ENCODE measurements at regions of chr9 and their contacts with region 1.

Region 1: GRCh38 chr9:127734747-127735529 is at the start of gene TOR2A:
- DNase-seq: peak; percentile 98 to 100 (median 99)
- ATAC-seq: peak; percentile 94
- H3K4me3 ChIP-seq: peak within 1 kb of the TSS; percentile 67 to 79
- H3K4me3 Mint-ChIP-seq: peak within 1 kb of the TSS; percentile 91
- H3K27ac ChIP-seq: peak within 1 kb of the TSS; percentile 59 to 87
- H3K27ac Mint-ChIP-seq: peak within 1 kb of the TSS; percentile 86
- H3K4me1 ChIP-seq: peaks cover 18% of the 10 kb centered on the region
- H3K4me1 Mint-ChIP-seq: peaks cover 7% of the 10 kb centered on the region
- H3K27me3 ChIP-seq: no peaks in the 10 kb centered on the region
- H3K27me3 Mint-ChIP-seq: no peaks in the 10 kb centered on the region
- CTCF ChIP-seq: peak; percentile 80
- total RNA-seq, gene TOR2A: 4.7 to 5.3 TPM

Region 2: GRCh38 chr9:127450830-127451724 is 283.9 kb before region 1 on chr9 and contains the starts of genes LRSAM1 and RPL12:
- CTCF ChIA-PET with region 1: interaction called, 7 read pairs
- POLR2A ChIA-PET with region 1: no interaction called
- intact Hi-C with region 1: loop called (anchors 1 kb)
- DNase-seq: peak; percentile 97 to 100 (median 99)
- ATAC-seq: peak; percentile 82
- H3K4me3 ChIP-seq: peak within 1 kb of the TSS; percentile 90 to 94
- H3K4me3 Mint-ChIP-seq: peak within 1 kb of the TSS; percentile 96
- H3K27ac ChIP-seq: peak within 1 kb of the TSS; percentile 85
- H3K27ac Mint-ChIP-seq: peak within 1 kb of the TSS; percentile 96
- H3K4me1 ChIP-seq: peaks cover 31% of the 10 kb centered on the region
- H3K4me1 Mint-ChIP-seq: peaks cover 44% of the 10 kb centered on the region
- H3K27me3 ChIP-seq: no peaks in the 10 kb centered on the region
- H3K27me3 Mint-ChIP-seq: no peaks in the 10 kb centered on the region
- CTCF ChIP-seq: peak; percentile 21
- total RNA-seq, gene LRSAM1: 11.7 to 14.0 TPM
- total RNA-seq, gene RPL12: 1,908 to 1,959 TPM

Region 3: GRCh38 chr9:127611899-127612790 is 122.8 kb before region 1 on chr9 and contains the start of gene STXBP1:
- CTCF ChIA-PET with region 1: interaction called, 4 read pairs
- POLR2A ChIA-PET with region 1: interaction called, 10 read pairs
- intact Hi-C with region 1: loop called (anchors 1 kb)
- DNase-seq: peak; percentile 70 to 92 (median 83)
- ATAC-seq: peak; percentile 80
- H3K4me3 ChIP-seq: peak within 1 kb of the TSS; percentile 59 to 82
- H3K4me3 Mint-ChIP-seq: peak within 1 kb of the TSS; percentile 93
- H3K27ac ChIP-seq: peak within 1 kb of the TSS in 1 of 2 experiments; percentile 42
- H3K27ac Mint-ChIP-seq: peak within 1 kb of the TSS; percentile 92
- H3K4me1 ChIP-seq: peaks cover 32% of the 10 kb centered on the region
- H3K4me1 Mint-ChIP-seq: peaks cover 36% of the 10 kb centered on the region
- H3K27me3 ChIP-seq: peaks cover 4 to 9% of the 10 kb centered on the region in 2 experiments
- H3K27me3 Mint-ChIP-seq: peaks cover 9% of the 10 kb centered on the region
- CTCF ChIP-seq: no peak
- total RNA-seq, gene STXBP1: 7.7 to 8.9 TPM

Region 4: GRCh38 chr9:127770905-127771569 is 36.1 kb after region 1 on chr9:
- CTCF ChIA-PET with region 1: interaction called, 22 read pairs
- POLR2A ChIA-PET with region 1: interaction called, 10 read pairs
- intact Hi-C with region 1: loop called (anchors 1 kb)
- DNase-seq: peak; percentile 81 to 96 (median 93)
- ATAC-seq: peak; percentile 79
- H3K4me3 ChIP-seq: peak overlapping the region; percentile 55 to 65
- H3K4me3 Mint-ChIP-seq: peak overlapping the region; percentile 88
- H3K27ac ChIP-seq: peak overlapping the region; percentile 58 to 83
- H3K27ac Mint-ChIP-seq: peak overlapping the region; percentile 96
- H3K4me1 ChIP-seq: peaks cover 75% of the 10 kb centered on the region
- H3K4me1 Mint-ChIP-seq: peaks cover 73% of the 10 kb centered on the region
- H3K27me3 ChIP-seq: no peaks in the 10 kb centered on the region
- H3K27me3 Mint-ChIP-seq: no peaks in the 10 kb centered on the region
- CTCF ChIP-seq: no peak

Region 5: DNA sequence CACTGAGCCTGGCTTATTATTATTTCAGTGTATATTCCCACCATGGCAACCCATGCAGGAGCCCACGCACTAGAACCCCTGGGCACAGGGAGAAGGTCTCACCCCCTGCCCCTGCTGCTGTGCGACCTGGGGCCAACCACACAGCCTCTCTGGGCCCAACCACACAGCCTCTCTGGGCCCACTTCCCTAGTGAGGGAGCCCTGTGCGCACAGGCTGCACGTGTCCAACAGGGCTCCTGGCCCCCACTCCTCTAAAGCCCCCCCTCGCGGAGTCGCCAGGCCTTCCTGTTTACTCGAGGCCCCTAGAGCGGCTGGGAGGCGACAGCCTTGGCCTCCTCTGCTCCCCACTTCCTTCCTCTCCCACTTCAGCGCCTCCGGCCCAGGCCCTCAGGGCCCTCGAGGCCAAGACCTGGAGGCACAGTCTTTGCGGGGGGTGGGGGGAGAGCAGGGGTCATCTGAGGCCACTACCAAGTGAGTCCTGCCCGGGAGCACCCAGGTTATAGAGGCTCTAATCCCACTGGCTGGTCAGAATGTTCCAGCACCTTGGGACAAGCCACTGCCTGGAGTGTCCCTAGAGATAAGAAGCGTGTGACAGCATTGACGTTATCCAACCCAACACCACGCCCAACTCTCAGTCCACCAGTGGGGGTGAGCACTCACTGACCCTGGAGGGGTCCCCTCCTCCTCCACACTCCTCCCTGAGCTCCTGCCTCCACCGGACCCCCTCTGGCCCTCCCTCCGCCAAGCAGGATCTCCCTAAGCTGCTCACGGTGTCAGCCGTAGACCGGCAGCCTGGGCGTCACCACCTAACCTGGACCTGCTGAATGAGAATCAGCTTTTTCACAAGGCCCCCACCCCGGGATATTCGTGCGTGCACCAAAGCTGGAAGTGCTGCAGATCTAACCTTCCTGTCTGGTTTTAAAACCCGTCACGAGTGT is 127.4 kb after region 1 on chr9:
- CTCF ChIA-PET with region 1: interaction called, 10 read pairs
- POLR2A ChIA-PET with region 1: interaction called, 3 read pairs
- intact Hi-C with region 1: no loop called
- DNase-seq: peak; percentile 38 to 86 (median 69)
- ATAC-seq: peak; percentile 65
- H3K4me3 ChIP-seq: peak overlapping the region in 1 of 2 experiments; percentile 26
- H3K4me3 Mint-ChIP-seq: peak overlapping the region; percentile 67
- H3K27ac ChIP-seq: peak overlapping the region; percentile 40 to 79
- H3K27ac Mint-ChIP-seq: peak overlapping the region; percentile 93
- H3K4me1 ChIP-seq: peaks cover 52% of the 10 kb centered on the region
- H3K4me1 Mint-ChIP-seq: peaks cover 55% of the 10 kb centered on the region
- H3K27me3 ChIP-seq: no peaks in the 10 kb centered on the region
- H3K27me3 Mint-ChIP-seq: no peaks in the 10 kb centered on the region
- CTCF ChIP-seq: no peak